H1 (cell line): ENCODE measurements at regions of chr17 and their contacts with region 1.

Region 1: DNA sequence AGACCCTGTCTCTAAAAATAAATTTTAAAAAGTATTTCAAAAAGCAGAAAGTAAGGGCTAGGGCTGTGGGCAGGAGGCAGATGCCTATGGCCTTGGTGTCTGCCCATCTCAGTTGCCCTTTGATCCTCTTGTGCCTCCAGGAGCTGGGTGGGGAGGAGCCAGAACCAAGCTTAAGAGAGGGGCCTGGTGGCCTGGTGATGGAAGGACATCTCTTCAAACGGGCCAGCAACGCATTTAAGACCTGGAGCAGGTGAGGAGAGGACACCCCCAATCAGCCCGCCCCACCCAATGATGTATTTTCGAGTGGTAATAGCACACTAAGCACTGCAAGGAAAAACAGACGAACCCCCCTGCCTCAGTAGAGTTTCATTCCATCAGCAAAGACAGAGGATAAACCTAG is 7.6 kb upstream of the KCTD11 start:
- DNase-seq: no peak
- H3K4me3 ChIP-seq: no peak overlapping the region
- H3K27ac ChIP-seq: no peak overlapping the region
- H3K4me1 ChIP-seq: peaks cover 0 to 3% (median 1%) of the 10 kb centered on the region in 4 experiments; a peak in 5 of 7 replicates
- H3K27me3 ChIP-seq: no peaks in the 10 kb centered on the region
- CTCF ChIP-seq: no peak
- EP300 ChIP-seq: no peak
- POLR2A ChIP-seq: no peak
- RAD21 ChIP-seq: no peak

Region 2: DNA sequence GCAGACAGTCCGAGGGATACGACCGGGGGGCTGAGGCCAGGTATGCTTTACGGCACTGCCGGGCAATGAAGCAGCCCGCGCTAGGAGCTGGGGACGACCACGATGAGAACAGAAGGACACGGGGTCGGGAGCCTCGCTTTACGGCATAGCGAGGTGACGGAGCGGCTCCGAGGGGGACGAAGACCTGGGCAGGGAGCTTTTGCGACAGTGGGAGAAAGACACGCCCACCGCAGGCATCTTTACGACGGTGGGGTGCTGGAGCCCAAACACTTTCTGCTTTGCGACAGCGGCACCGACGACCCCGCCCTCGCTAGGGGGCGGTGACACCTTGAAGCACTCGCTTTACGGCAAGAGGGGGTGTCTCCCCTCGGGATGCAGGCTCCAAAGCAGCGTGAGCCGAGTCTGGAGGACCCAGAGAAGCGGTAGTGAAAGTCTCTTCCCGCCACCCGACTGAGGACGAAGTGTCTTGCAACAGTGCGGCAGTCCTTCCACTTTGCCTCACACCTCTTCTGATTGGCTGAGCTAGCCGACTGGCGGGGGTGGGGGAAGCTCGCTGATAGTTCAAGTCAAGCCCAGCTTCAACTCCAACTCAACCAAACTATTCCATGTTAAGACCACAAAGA is 14.9 kb before region 1 on chr17:
- CTCF ChIA-PET with region 1: interaction called, 167 read pairs
- POLR2A ChIA-PET with region 1: interaction called, 78 read pairs
- DNase-seq: peak; percentile 95 to 99
- H3K4me3 ChIP-seq: peak overlapping the region; percentile 69 to 97 (median 82)
- H3K27ac ChIP-seq: peak overlapping the region; percentile 84
- H3K4me1 ChIP-seq: peaks cover 0 to 19% (median 8%) of the 10 kb centered on the region in 4 experiments; a peak in 6 of 7 replicates
- H3K27me3 ChIP-seq: no peaks in the 10 kb centered on the region; a peak in 1 of 7 replicates
- CTCF ChIP-seq: no peak
- EP300 ChIP-seq: no peak; a peak in 1 of 3 replicates
- POLR2A ChIP-seq: peak in 1 of 2 experiments; percentile 80; a peak in 2 of 3 replicates
- RAD21 ChIP-seq: peak in 1 of 2 experiments; percentile 3; a peak in 1 of 4 replicates

Region 3: GRCh38 chr17:7538891-7539290 is 194.5 kb after region 1 on chr17:
- CTCF ChIA-PET with region 1: no interaction called
- POLR2A ChIA-PET with region 1: no interaction called
- DNase-seq: no peak
- H3K4me3 ChIP-seq: no peak overlapping the region
- H3K27ac ChIP-seq: no peak overlapping the region
- H3K4me1 ChIP-seq: no peaks in the 10 kb centered on the region
- H3K27me3 ChIP-seq: no peaks in the 10 kb centered on the region; a peak in 1 of 7 replicates
- CTCF ChIP-seq: no peak
- EP300 ChIP-seq: no peak
- POLR2A ChIP-seq: no peak
- RAD21 ChIP-seq: no peak